MCF 10A (cell line): ENCODE measurements at regions of chr7 and their contacts with region 1.

Region 1: GRCh38 chr7:80478683-80479082 is 33.2 kb downstream of the GNAT3 start:
- DNase-seq: peak; percentile 31
- H3K4me3 Mint-ChIP-seq: no peak overlapping the region
- H3K27ac Mint-ChIP-seq: no peak overlapping the region
- H3K4me1 Mint-ChIP-seq: peaks cover 20% of the 10 kb centered on the region
- H3K27me3 Mint-ChIP-seq: no peaks in the 10 kb centered on the region
- CTCF ChIP-seq: no peak

Region 2: DNA sequence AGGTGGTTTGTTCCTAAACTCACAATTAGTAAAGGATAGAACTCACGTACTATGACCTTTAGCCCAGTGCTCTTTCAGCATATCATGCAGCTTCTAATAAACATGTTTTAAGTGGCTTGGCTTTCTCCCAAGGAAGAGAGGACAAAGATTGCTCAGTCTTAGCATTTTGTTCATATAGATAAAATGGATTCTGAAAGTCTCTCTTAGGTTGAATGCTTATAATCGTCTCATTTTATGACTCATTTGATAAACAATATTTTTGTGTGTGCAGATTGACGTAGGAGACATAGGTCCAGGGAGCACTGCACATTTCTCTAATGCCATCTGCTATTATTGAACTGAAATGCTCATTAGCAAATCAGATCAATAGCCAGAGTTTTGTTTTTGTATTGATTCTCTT is 11.6 kb before region 1 on chr7:
- CTCF ChIA-PET with region 1: interaction called, 3 read pairs
- POLR2A ChIA-PET with region 1: interaction called, 18 read pairs
- intact Hi-C with region 1: no loop called
- DNase-seq: peak; percentile 58
- H3K4me3 Mint-ChIP-seq: no peak overlapping the region
- H3K27ac Mint-ChIP-seq: peak overlapping the region; percentile 31
- H3K4me1 Mint-ChIP-seq: peaks cover 6% of the 10 kb centered on the region
- H3K27me3 Mint-ChIP-seq: no peaks in the 10 kb centered on the region
- CTCF ChIP-seq: no peak